PC-9 (cell line): ENCODE measurements at regions of chr5 and their contacts with region 1.

Region 1: DNA sequence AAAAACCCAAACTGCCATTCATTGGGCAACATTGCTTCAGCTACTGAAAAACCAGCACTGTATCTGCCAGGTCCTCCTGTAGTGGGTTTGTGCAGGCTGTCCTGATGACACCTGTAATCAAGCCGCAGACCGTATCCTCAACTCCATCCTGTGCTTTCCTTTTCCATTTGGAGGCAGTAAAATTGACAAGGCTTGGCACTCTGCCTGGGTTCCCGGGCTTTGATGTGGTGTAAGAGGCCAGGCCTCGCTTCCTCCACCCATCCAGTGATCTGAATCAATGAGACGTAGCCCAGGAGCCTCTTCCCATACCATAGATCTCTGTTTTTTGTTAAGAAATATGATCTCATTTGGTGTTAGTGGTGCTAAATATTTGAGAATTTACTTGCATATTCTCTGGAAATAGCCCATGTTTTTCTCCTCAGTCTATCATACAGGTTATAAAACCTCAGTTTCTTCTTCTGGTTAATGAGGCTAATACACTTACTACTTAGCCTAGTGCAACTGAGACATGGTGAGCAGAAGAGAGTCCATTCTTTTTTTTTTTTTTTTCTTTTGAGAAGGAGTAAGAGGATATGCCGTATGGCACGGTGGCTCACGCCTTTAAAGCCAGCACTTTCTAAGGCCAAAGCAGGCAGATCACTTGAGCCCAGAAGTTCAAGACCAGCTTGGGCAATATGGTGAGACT is 34.8 kb downstream of the LSM11 start:
- DNase-seq: no peak
- H3K4me3 ChIP-seq: no peak overlapping the region
- H3K27ac ChIP-seq: no peak overlapping the region
- H3K4me1 ChIP-seq: no peaks in the 10 kb centered on the region
- H3K27me3 ChIP-seq: no peaks in the 10 kb centered on the region
- CTCF ChIP-seq: no peak

Region 2: GRCh38 chr5:159098603-159099436 is 1320.6 kb after region 1 on chr5:
- CTCF ChIA-PET with region 1: no interaction called
- POLR2A ChIA-PET with region 1: no interaction called
- intact Hi-C with region 1: loop called (anchors 10 kb)
- DNase-seq: no peak
- H3K4me3 ChIP-seq: no peak overlapping the region
- H3K27ac ChIP-seq: no peak overlapping the region
- H3K4me1 ChIP-seq: no peaks in the 10 kb centered on the region
- H3K27me3 ChIP-seq: peaks cover 30% of the 10 kb centered on the region; the same call in 1 of the 2 replicates
- CTCF ChIP-seq: no peak